Activated CD4-positive, alpha-beta T cell treated with anti-CD3 and anti-CD28 coated beads, Interleukin-2, amount 10 ng/mL, durations not matched to agents 24 days and 14 days (primary cell): ENCODE measurements at regions of chr21 and their contacts with region 1.

Region 1: DNA sequence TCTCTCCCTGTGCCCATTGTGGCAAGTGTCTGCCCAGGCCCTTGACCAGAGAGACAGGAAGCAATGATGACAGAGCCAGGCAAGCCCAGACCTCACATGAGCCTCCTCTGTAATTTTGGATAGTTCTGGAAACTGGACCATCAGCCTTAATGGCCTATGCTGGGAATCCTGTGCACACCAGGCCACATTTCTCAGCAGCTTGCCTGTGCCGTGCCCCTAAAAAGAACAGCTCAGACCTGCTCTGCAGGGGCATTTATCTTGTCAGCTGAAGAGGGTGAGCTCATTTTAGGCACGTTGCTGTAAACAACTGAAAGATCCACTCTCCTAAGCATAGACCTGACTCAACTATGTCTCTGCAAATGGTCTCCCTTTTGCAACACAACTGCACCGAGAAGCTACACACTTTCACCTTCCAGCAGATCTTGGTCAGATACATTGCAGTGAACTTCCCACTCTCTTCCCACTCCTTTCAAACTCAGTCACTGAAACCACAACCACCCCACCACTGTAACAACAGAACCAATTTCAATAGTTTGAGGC is 53.5 kb upstream of the BACH1 start:
- DNase-seq: no peak
- H3K4me3 Mint-ChIP-seq: no peak overlapping the region
- H3K27ac Mint-ChIP-seq: peak overlapping the region; percentile 72
- H3K4me1 Mint-ChIP-seq: peaks cover 11% of the 10 kb centered on the region
- H3K27me3 Mint-ChIP-seq: peaks cover 25% of the 10 kb centered on the region

Region 2: GRCh38 chr21:29078869-29079767 is 166.1 kb before region 1 on chr21:
- intact Hi-C with region 1: loop called (anchors 2 kb)
- DNase-seq: peak; percentile 67
- H3K4me3 Mint-ChIP-seq: peak overlapping the region; percentile 88
- H3K27ac Mint-ChIP-seq: peak overlapping the region; percentile 77
- H3K4me1 Mint-ChIP-seq: peaks cover 34% of the 10 kb centered on the region
- H3K27me3 Mint-ChIP-seq: no peaks in the 10 kb centered on the region

Region 3: DNA sequence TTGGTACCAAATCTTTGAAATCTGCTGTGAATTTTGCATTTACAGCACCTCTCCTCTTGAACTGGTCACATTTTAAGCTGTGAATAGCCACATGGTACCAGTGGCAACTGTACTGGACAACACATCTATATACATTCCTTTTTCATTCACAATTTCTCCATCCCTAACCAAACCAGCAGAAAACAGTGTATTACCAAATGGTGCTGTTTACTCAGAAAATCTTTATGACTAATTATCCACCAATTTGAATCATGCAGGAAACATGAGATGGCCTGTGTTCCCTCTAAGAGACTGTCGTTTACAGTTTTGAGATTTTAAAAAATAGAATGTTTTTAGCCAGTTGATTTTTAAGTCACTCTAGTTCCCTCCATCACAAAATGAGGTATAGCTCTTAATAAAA is 154.1 kb before region 1 on chr21:
- intact Hi-C with region 1: loop called (anchors 5 kb)
- DNase-seq: no peak
- H3K4me3 Mint-ChIP-seq: no peak overlapping the region
- H3K27ac Mint-ChIP-seq: no peak overlapping the region
- H3K4me1 Mint-ChIP-seq: peaks cover 17% of the 10 kb centered on the region
- H3K27me3 Mint-ChIP-seq: no peaks in the 10 kb centered on the region

Region 4: GRCh38 chr21:29195981-29196669 is 49.0 kb before region 1 on chr21:
- intact Hi-C with region 1: loop called (anchors 1 kb)
- DNase-seq: peak; percentile 92
- H3K4me3 Mint-ChIP-seq: peak overlapping the region; percentile 91
- H3K27ac Mint-ChIP-seq: peak overlapping the region; percentile 94
- H3K4me1 Mint-ChIP-seq: peaks cover 37% of the 10 kb centered on the region
- H3K27me3 Mint-ChIP-seq: no peaks in the 10 kb centered on the region

Region 5: DNA sequence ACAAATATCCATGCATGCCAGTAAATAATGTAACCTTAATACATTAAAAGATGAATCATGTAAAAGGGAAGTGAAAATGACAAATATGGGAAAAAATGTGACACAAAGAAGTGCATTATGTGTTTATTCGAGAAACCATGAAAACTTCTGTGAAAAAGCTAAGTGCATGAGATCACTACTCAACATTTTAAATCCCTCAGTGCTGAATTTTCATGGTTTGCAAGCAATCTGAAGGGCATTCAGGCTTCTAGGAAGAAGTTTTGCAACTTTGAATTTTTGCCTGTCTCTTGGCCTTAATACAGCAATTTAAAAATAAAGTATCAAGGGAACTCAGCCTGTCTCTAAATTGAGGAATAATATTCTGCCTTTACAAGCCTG is 36.5 kb before region 1 on chr21:
- intact Hi-C with region 1: loop called (anchors 1 kb)
- DNase-seq: no peak
- H3K4me3 Mint-ChIP-seq: no peak overlapping the region
- H3K27ac Mint-ChIP-seq: no peak overlapping the region
- H3K4me1 Mint-ChIP-seq: peaks cover 10% of the 10 kb centered on the region
- H3K27me3 Mint-ChIP-seq: no peaks in the 10 kb centered on the region

Region 6: GRCh38 chr21:29342363-29342957 is 97.3 kb after region 1 on chr21:
- intact Hi-C with region 1: loop called (anchors 5 kb)
- DNase-seq: no peak
- H3K4me3 Mint-ChIP-seq: no peak overlapping the region
- H3K27ac Mint-ChIP-seq: peak overlapping the region; percentile 78
- H3K4me1 Mint-ChIP-seq: peaks cover 27% of the 10 kb centered on the region
- H3K27me3 Mint-ChIP-seq: no peaks in the 10 kb centered on the region

Region 7: DNA sequence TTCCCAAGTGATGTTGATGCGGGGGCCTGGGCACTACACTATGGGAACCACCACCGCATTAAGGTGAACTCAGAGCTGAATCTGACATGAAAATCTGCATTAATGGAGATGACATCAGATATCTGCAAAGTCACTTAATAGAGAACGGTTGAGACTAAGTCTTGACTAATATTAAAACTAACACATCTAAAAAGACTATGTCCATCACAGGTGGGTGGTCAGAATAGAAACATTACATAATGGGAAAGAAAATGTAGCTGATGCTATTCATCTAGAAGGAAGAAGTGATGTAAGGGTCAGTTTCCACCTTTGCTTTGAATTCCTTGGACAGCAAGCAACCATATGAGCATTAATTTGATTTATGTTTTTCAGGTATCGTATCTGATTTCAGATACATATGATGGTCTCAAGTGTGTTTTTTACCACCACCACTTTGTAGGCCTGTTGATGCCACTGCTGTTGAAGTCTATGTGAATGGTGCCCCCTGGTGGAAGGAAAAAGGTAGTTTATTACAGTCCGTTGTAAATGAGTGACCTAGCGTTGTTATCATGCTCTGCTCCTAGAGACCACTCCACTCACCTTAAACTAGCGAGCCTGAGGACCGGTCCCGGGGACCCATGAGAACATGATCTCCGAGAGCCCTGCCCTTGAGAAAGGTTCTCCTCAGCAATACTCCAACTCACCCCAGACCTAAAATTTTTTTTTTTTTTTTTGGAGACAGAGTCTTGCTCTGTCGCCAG is 127.1 kb after region 1 on chr21:
- intact Hi-C with region 1: loop called (anchors 1 kb)
- DNase-seq: peak; percentile 89
- H3K4me3 Mint-ChIP-seq: no peak overlapping the region
- H3K27ac Mint-ChIP-seq: peak overlapping the region; percentile 57
- H3K4me1 Mint-ChIP-seq: peaks cover 18% of the 10 kb centered on the region
- H3K27me3 Mint-ChIP-seq: no peaks in the 10 kb centered on the region